ENCODE measurements at regions of chr12 and their contacts with region 1.

Region 1: GRCh38 chr12:29088611-29089219 is 60.4 kb upstream of the FAR2 start:
- DNase-seq: peak in 4 of 5 donors; percentile 22 to 33 (median 31)
- H3K4me3 ChIP-seq: no peak overlapping the region
- H3K4me3 Mint-ChIP-seq: no peak overlapping the region
- H3K27ac ChIP-seq: no peak overlapping the region
- H3K27ac Mint-ChIP-seq: no peak overlapping the region
- H3K4me1 ChIP-seq: no peaks in the 10 kb centered on the region
- H3K4me1 Mint-ChIP-seq: peaks cover 0 to 5% (median 3%) of the 10 kb centered on the region in 4 donors
- H3K27me3 ChIP-seq: no peaks in the 10 kb centered on the region
- H3K27me3 Mint-ChIP-seq: peaks cover 0 to 3% of the 10 kb centered on the region in 2 donors

Region 2: GRCh38 chr12:29073628-29074239 is 15.0 kb before region 1 on chr12:
- CTCF ChIA-PET with region 1: interaction called, 20 read pairs
- POLR2A ChIA-PET with region 1: no interaction called
- intact Hi-C with region 1: no loop called
- DNase-seq: peak; percentile 32 to 49 (median 37)
- H3K4me3 ChIP-seq: no peak overlapping the region
- H3K4me3 Mint-ChIP-seq: no peak overlapping the region
- H3K27ac ChIP-seq: no peak overlapping the region
- H3K27ac Mint-ChIP-seq: no peak overlapping the region
- H3K4me1 ChIP-seq: no peaks in the 10 kb centered on the region
- H3K4me1 Mint-ChIP-seq: peaks cover 0 to 2% (median 0%) of the 10 kb centered on the region in 4 donors
- H3K27me3 ChIP-seq: no peaks in the 10 kb centered on the region
- H3K27me3 Mint-ChIP-seq: peaks cover 13 to 18% of the 10 kb centered on the region in 2 donors

Region 3: GRCh38 chr12:29273178-29273843 is 184.6 kb after region 1 on chr12:
- CTCF ChIA-PET with region 1: no interaction called
- POLR2A ChIA-PET with region 1: no interaction called
- intact Hi-C with region 1: no loop called
- DNase-seq: no peak
- H3K4me3 ChIP-seq: no peak overlapping the region
- H3K4me3 Mint-ChIP-seq: no peak overlapping the region
- H3K27ac ChIP-seq: no peak overlapping the region
- H3K27ac Mint-ChIP-seq: no peak overlapping the region
- H3K4me1 ChIP-seq: no peaks in the 10 kb centered on the region
- H3K4me1 Mint-ChIP-seq: no peaks in the 10 kb centered on the region
- H3K27me3 ChIP-seq: no peaks in the 10 kb centered on the region
- H3K27me3 Mint-ChIP-seq: no peaks in the 10 kb centered on the region

Measured in CD4-positive, alpha-beta memory T cell (primary cell).